ENCODE measurements at regions of chr16 and their contacts with region 1.

Region 1: DNA sequence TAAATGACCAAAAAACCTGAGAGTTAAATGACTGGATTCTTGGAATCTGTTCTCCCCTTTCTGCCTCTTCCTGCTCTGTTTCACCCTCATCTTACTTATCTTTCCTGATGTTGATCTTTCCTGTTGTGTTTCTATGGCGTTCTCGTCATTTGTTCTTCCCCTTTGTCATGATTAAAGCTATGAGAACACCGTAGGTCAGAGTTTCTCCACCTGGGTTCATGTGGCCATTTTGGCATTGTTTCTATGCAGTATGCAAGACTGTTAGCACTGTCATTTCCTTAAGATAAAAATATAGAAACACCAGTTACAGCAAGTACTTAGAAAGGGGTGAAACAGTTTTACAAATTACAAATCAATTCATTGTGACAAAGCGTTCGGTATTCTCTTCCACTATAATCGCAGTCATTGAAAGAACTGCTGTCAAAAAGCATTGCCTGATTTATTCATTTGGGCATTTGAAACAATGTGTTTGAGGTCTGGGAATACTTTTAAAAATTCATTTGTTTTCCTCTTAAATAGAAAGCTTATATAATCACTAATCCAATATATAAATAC is 166.0 kb downstream of the PHKB start:
- DNase-seq: no peak
- H3K4me3 ChIP-seq: no peak overlapping the region
- H3K4me3 Mint-ChIP-seq: no peak overlapping the region
- H3K27ac ChIP-seq: no peak overlapping the region
- H3K27ac Mint-ChIP-seq: no peak overlapping the region
- H3K4me1 ChIP-seq: no peaks in the 10 kb centered on the region
- H3K4me1 Mint-ChIP-seq: peaks cover 0 to 3% (median 0%) of the 10 kb centered on the region in 4 donors
- H3K27me3 ChIP-seq: no peaks in the 10 kb centered on the region
- H3K27me3 Mint-ChIP-seq: no peaks in the 10 kb centered on the region

Region 2: GRCh38 chr16:47574091-47575054 is 52.8 kb before region 1 on chr16:
- CTCF ChIA-PET with region 1: no interaction called
- POLR2A ChIA-PET with region 1: no interaction called
- intact Hi-C with region 1: loop called (anchors 10 kb)
- DNase-seq: peak in 4 of 5 donors; percentile 9 to 39 (median 32)
- H3K4me3 ChIP-seq: no peak overlapping the region
- H3K4me3 Mint-ChIP-seq: peak overlapping the region; percentile 3 to 67 (median 34)
- H3K27ac ChIP-seq: no peak overlapping the region
- H3K27ac Mint-ChIP-seq: peak overlapping the region; percentile 38 to 91 (median 48)
- H3K4me1 ChIP-seq: peaks cover 49% of the 10 kb centered on the region
- H3K4me1 Mint-ChIP-seq: peaks cover 33 to 60% (median 48%) of the 10 kb centered on the region in 4 donors
- H3K27me3 ChIP-seq: no peaks in the 10 kb centered on the region
- H3K27me3 Mint-ChIP-seq: no peaks in the 10 kb centered on the region